ENCODE measurements at regions of chr3 and their contacts with region 1.

Region 1: DNA sequence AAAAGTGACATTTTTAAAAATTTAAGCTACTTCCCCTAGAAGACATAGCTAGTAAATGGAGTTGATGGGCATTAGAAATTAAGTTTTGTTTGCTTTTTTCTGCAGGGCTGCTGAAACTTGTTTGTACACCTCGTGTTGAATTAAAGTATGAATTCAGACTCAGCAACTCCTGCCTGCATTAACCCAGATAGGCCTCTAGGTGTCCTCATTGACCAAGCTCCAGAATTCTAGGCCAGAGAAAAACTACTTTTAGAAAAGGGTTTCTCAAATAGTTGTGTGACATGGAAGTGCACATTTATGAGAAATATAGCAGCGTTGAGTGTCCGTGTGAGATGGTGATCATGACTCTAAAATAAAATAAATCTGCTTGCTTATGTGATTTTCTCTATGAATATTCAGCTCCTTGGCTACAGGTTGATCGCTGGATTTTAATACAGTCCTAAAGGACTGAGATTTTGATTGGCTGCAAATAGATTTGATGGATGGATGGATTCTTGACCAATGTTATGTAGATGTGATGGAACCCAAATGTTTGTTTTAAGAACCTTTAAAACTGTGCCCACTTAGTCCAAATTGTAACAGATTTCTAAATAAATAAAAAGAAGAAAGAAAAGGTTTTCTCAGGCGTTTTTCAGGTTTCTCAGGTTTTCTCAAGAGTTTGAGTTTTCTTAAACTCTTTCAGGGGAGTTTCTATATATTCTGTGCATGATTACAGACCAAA is 39.4 kb upstream of the LMOD3 start:
- DNase-seq: peak in 1 of 2 experiments; percentile 43
- H3K4me3 ChIP-seq: no peak overlapping the region
- H3K4me3 Mint-ChIP-seq: no peak overlapping the region
- H3K27ac Mint-ChIP-seq: no peak overlapping the region
- H3K4me1 ChIP-seq: peaks cover 8% of the 10 kb centered on the region; the same call in 1 of the 2 replicates
- H3K4me1 Mint-ChIP-seq: peaks cover 14% of the 10 kb centered on the region
- H3K27me3 ChIP-seq: no peaks in the 10 kb centered on the region
- H3K27me3 Mint-ChIP-seq: no peaks in the 10 kb centered on the region
- CTCF ChIP-seq: peak; percentile 86

Region 2: GRCh38 chr3:68771683-68772082 is 390.1 kb before region 1 on chr3:
- CTCF ChIA-PET with region 1: no interaction called
- POLR2A ChIA-PET with region 1: no interaction called
- intact Hi-C with region 1: no loop called
- DNase-seq: no peak
- H3K4me3 ChIP-seq: no peak overlapping the region
- H3K4me3 Mint-ChIP-seq: no peak overlapping the region
- H3K27ac Mint-ChIP-seq: no peak overlapping the region
- H3K4me1 ChIP-seq: no peaks in the 10 kb centered on the region
- H3K4me1 Mint-ChIP-seq: no peaks in the 10 kb centered on the region
- H3K27me3 ChIP-seq: no peaks in the 10 kb centered on the region
- H3K27me3 Mint-ChIP-seq: peaks cover 3% of the 10 kb centered on the region
- CTCF ChIP-seq: no peak

Region 3: DNA sequence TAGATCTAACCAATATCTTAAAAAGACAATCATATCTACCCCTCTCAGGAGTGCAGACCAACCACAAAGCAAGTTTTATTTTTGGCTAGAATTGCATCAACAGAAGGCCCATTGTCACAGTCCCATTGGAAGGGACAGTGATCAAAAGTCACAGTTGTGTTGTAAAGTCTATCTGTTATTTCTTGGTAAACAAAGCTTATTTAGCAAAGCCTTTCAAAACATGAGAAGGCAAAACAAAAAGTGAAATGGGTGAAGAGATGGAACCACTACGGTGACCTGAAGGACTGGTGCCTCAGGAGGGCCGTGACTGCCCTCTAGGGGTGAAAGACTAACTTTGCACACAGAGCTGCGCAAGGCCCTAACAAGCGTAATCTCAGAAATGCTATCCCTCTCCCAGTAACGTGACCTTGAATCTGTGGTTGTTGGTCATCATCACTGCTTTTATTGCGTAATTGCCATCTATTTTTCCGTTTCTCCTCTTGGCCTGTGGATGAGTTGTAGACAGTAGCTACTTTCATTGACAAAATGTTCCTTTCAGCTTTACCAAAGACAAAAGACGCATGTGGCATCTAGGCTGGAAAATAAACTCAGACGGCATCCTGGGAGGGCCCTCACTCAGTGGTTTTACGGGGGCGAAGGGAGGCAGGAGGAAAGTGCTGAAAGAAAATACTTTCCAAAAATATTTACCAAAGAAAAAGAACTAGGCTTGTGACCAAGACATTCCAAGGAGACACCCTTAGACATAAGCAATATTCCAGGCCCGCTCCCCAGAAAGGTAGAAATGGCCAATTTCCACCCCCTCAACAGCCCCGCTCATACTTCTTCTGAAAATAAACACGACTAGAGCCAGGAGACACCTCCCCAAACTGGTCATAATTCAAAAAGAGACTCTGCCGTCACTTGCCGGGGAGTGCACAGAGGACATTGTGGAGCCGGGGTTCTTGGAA is 144.8 kb after region 1 on chr3:
- CTCF ChIA-PET with region 1: interaction called, 9 read pairs
- POLR2A ChIA-PET with region 1: no interaction called
- intact Hi-C with region 1: loop called (anchors 1 kb)
- DNase-seq: peak; percentile 66 to 77
- H3K4me3 ChIP-seq: no peak overlapping the region
- H3K4me3 Mint-ChIP-seq: no peak overlapping the region
- H3K27ac Mint-ChIP-seq: no peak overlapping the region
- H3K4me1 ChIP-seq: peaks cover 25% of the 10 kb centered on the region
- H3K4me1 Mint-ChIP-seq: peaks cover 11% of the 10 kb centered on the region
- H3K27me3 ChIP-seq: no peaks in the 10 kb centered on the region
- H3K27me3 Mint-ChIP-seq: no peaks in the 10 kb centered on the region
- CTCF ChIP-seq: peak; percentile 85 to 87

Region 4: GRCh38 chr3:69371816-69372215 is 210.1 kb after region 1 on chr3:
- CTCF ChIA-PET with region 1: no interaction called
- POLR2A ChIA-PET with region 1: no interaction called
- intact Hi-C with region 1: no loop called
- DNase-seq: no peak
- H3K4me3 ChIP-seq: no peak overlapping the region
- H3K4me3 Mint-ChIP-seq: no peak overlapping the region
- H3K27ac Mint-ChIP-seq: no peak overlapping the region
- H3K4me1 ChIP-seq: no peaks in the 10 kb centered on the region
- H3K4me1 Mint-ChIP-seq: no peaks in the 10 kb centered on the region
- H3K27me3 ChIP-seq: no peaks in the 10 kb centered on the region
- H3K27me3 Mint-ChIP-seq: no peaks in the 10 kb centered on the region
- CTCF ChIP-seq: no peak

Region 5: DNA sequence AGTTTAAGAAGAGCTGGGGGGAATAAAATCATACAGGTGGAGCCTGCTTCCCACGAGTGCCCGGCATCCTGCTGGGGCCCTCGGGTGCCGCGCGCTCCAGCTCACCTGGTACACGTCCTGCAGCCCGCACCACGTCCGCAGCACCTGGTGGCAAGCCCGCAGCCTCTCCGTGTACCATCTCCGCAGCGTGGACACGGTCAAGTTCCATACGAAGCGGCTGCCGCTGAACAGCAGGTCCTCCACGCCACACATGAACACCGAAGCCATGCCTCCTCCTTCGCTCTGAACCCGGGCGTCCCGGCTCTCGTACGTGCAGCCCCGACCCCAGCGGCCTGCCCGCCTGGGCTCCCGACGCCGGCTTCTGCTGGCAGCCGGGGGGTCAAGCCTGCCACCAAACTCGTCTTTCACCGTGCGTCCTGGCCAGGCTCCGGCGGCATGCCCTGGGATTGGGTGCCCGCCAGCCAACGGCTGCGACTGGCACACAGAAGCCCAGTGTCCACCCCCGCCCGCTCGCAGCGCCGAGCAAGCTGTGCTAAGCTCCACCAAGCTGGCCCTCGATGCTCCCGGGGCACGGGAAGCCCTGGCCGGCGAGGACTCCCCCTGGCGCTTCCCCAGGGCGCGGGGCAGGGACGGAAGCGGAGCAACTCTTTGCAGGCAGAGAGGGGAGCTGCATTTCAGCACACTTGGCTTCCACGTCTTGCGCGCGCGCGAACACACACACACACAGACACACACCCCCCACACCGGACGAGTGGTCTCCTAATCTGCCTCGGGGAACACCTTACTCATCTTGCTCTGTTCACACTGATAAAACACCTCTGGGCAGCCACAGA is 224.2 kb after region 1 on chr3 and contains the start of gene FRMD4B:
- CTCF ChIA-PET with region 1: interaction called, 9 read pairs
- POLR2A ChIA-PET with region 1: no interaction called
- intact Hi-C with region 1: loop called (anchors 1 kb)
- DNase-seq: peak; percentile 59 to 82
- H3K4me3 ChIP-seq: peak within 1 kb of the TSS; percentile 46
- H3K4me3 Mint-ChIP-seq: peak within 1 kb of the TSS; percentile 76
- H3K27ac Mint-ChIP-seq: no peak within 1 kb of the TSS
- H3K4me1 ChIP-seq: peaks cover 5% of the 10 kb centered on the region; the same call in 1 of the 2 replicates
- H3K4me1 Mint-ChIP-seq: no peaks in the 10 kb centered on the region
- H3K27me3 ChIP-seq: peaks cover 1% of the 10 kb centered on the region; the same call in 1 of the 2 replicates
- H3K27me3 Mint-ChIP-seq: no peaks in the 10 kb centered on the region
- CTCF ChIP-seq: peak in 1 of 2 experiments; percentile 78
- total RNA-seq, gene FRMD4B: 43.2 and 47.5 TPM in 2 replicates

Region 6: GRCh38 chr3:69425261-69425660 is 263.5 kb after region 1 on chr3:
- CTCF ChIA-PET with region 1: interaction called, 6 read pairs
- POLR2A ChIA-PET with region 1: no interaction called
- intact Hi-C with region 1: loop called (anchors 1 kb)
- DNase-seq: peak in 1 of 2 experiments; percentile 58
- H3K4me3 ChIP-seq: no peak overlapping the region
- H3K4me3 Mint-ChIP-seq: no peak overlapping the region
- H3K27ac Mint-ChIP-seq: no peak overlapping the region
- H3K4me1 ChIP-seq: peaks cover 15% of the 10 kb centered on the region
- H3K4me1 Mint-ChIP-seq: peaks cover 18% of the 10 kb centered on the region
- H3K27me3 ChIP-seq: no peaks in the 10 kb centered on the region
- H3K27me3 Mint-ChIP-seq: no peaks in the 10 kb centered on the region
- CTCF ChIP-seq: peak; percentile 53 to 57